ENCODE measurements at regions of chr2 and their contacts with region 1.

Region 1: DNA sequence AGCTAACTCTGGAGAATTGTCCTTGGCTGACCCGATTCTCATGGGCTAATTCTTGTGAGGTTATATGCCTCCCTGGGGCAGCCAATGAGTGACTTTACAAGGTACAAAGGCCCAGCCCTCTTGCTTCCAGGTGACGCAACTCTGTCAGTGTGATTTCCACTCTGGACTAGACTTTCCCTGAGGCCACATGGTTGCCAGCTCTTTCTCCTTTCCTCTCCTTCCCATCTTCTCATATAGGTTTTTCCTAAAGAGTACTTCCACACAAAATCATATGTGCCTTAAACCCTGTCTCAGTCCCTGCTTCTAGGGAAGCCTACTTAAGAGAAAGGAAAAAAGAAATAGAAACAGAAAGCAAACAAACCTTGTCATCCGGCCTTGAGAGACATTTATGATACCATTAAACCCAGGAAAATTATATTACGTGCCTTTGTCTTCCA is 226.2 kb upstream of the ZSWIM2 start:
- DNase-seq: peak; percentile 37
- H3K4me3 Mint-ChIP-seq: peak overlapping the region; percentile 11
- H3K27ac Mint-ChIP-seq: peak overlapping the region; percentile 56
- H3K4me1 Mint-ChIP-seq: peaks cover 31% of the 10 kb centered on the region
- H3K27me3 Mint-ChIP-seq: no peaks in the 10 kb centered on the region
- CTCF ChIP-seq: no peak

Region 2: DNA sequence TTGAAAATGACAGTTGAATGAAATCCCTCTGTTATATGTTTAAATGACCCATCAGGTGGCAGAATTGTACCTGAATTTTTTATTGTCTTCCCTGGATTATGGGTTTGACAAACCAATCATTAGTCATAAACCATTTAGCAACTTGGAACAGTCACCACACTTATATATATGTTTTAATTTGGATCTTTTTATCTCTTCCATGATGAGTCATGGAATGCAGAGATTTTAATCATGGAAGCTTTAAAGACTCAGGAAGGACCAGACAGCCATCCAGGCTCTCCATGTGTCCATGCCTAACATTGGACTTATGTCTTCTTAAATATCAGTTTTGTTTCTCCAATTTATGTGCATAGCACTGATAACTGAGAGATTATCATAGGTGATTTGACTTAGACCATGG is 37.9 kb before region 1 on chr2:
- CTCF ChIA-PET with region 1: no interaction called
- intact Hi-C with region 1: loop called (anchors 1 kb)
- DNase-seq: no peak
- H3K4me3 Mint-ChIP-seq: no peak overlapping the region
- H3K27ac Mint-ChIP-seq: no peak overlapping the region
- H3K4me1 Mint-ChIP-seq: peaks cover 19% of the 10 kb centered on the region
- H3K27me3 Mint-ChIP-seq: no peaks in the 10 kb centered on the region
- CTCF ChIP-seq: no peak

Measured in Calu3 (cell line).